ENCODE measurements at regions of chr4 and their contacts with region 1.

Region 1: GRCh38 chr4:83012687-83013419 is 2.2 kb upstream of the LIN54 start:
- DNase-seq: peak; percentile 97 to 99 (median 98)
- ATAC-seq: peak; percentile 98 to 99
- H3K4me3 ChIP-seq: peak overlapping the region; percentile 68
- H3K27ac ChIP-seq: peak overlapping the region; percentile 58
- H3K4me1 ChIP-seq: no peaks in the 10 kb centered on the region
- H3K27me3 ChIP-seq: no peaks in the 10 kb centered on the region

Region 2: GRCh38 chr4:82890901-82891706 is 121.7 kb before region 1 on chr4 and contains the start of gene SEC31A:
- intact Hi-C with region 1: loop called in 2 of 4 experiments (anchors 5 to 10 kb)
- DNase-seq: peak; percentile 98 to 99 (median 99)
- ATAC-seq: peak; percentile 99
- H3K4me3 ChIP-seq: peak within 1 kb of the TSS; percentile 74
- H3K27ac ChIP-seq: peak within 1 kb of the TSS; percentile 96
- H3K4me1 ChIP-seq: no peaks in the 10 kb centered on the region
- H3K27me3 ChIP-seq: no peaks in the 10 kb centered on the region
- total RNA-seq, gene SEC31A: 107 to 156 (median 128) TPM

Region 3: DNA sequence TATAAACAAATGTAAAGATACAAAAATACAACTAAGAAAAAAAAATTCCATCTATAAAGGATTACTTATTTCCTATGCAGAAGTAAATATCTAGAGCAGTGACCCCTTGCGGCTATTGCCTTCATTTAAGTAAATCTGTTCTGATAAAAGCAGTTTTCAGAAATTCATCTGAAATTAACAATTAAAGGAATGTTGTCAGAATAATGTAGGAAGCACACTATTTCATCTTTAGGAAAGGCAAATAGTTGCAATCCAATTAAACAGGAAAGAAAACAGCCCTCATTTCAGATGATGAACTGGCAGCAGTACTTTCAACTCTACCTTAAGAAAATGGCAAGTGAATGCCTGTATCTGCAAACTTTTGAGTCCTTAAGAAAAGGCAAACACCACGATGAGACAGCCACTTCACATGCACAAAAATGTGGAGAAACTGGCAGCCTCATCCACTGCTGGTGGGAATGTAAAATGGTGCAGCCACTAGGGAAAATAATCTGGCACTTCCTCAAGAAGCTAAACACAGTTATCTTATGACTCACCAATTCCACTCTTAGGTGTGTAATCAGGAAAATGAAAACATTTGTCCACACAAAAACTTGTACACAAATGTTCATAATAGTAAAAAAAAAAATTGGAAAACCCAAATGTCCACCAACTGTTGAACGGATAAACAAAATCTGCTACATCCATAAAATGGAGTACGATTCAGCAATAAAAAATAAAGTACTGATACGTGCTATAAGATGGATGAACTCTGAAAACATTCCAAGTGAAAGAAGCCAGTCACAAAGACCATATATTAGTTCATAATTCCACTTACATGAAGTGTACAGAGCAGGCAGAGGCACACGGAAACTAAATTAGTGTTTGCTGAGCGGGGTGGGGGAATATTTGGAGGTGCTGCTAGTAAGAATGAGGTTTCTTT is 114.3 kb before region 1 on chr4:
- intact Hi-C with region 1: loop called in 2 of 4 experiments (anchors 5 to 10 kb)
- DNase-seq: peak in 1 of 3 donors; percentile 30
- ATAC-seq: no peak
- H3K4me3 ChIP-seq: peak overlapping the region; percentile 90
- H3K27ac ChIP-seq: no peak overlapping the region
- H3K4me1 ChIP-seq: no peaks in the 10 kb centered on the region
- H3K27me3 ChIP-seq: no peaks in the 10 kb centered on the region

Region 4: GRCh38 chr4:83034630-83035494 is 22.0 kb after region 1 on chr4 and contains the start of gene COPS4:
- intact Hi-C with region 1: loop called in 1 of 4 experiments (anchors 2 kb)
- DNase-seq: peak; percentile 97 to 98 (median 97)
- ATAC-seq: peak; percentile 100
- H3K4me3 ChIP-seq: peak within 1 kb of the TSS; percentile 71
- H3K27ac ChIP-seq: peak within 1 kb of the TSS; percentile 95
- H3K4me1 ChIP-seq: peaks cover 3% of the 10 kb centered on the region
- H3K27me3 ChIP-seq: no peaks in the 10 kb centered on the region
- total RNA-seq, gene COPS4: 47.3 to 54.8 (median 50.7) TPM